ENCODE measurements at regions of chr15 and their contacts with region 1.

Region 1: DNA sequence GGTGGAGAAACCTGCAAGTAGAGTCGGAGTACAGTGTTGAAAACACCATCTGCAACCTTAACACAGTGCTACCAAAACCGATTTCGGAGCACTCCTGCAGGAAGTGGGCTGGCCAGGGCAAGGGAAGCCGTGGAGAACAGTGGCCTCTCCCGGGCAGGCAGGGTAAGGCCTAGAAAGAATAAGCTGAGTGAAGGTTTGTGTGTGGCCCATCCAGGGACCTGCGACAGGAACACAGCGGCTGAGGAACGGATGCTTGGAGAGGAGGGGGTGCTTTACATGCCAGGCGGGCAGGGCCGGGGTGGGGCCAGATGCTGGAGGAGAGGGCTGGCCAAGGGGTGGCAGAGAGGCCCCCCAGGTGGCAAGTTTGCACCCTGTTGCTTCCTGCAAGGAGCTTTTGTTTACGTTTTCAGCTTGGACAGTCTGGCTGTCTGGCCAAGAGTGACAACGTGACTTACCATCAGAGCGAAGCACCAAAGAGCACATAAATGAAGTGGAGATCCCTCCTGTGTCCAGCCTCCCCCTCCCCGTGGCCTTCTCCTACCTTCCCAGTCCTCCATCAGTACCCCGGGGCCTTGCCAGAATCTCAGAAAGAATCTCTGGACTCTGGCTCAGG is 156.5 kb downstream of the PGPEP1L start:
- DNase-seq: peak; percentile 78
- H3K4me3 ChIP-seq: no peak overlapping the region
- H3K27ac ChIP-seq: no peak overlapping the region
- H3K4me1 ChIP-seq: peaks cover 22% of the 10 kb centered on the region
- H3K27me3 ChIP-seq: no peaks in the 10 kb centered on the region
- CTCF ChIP-seq: peak; percentile 81 to 86
- POLR2A ChIP-seq: no peak

Region 2: DNA sequence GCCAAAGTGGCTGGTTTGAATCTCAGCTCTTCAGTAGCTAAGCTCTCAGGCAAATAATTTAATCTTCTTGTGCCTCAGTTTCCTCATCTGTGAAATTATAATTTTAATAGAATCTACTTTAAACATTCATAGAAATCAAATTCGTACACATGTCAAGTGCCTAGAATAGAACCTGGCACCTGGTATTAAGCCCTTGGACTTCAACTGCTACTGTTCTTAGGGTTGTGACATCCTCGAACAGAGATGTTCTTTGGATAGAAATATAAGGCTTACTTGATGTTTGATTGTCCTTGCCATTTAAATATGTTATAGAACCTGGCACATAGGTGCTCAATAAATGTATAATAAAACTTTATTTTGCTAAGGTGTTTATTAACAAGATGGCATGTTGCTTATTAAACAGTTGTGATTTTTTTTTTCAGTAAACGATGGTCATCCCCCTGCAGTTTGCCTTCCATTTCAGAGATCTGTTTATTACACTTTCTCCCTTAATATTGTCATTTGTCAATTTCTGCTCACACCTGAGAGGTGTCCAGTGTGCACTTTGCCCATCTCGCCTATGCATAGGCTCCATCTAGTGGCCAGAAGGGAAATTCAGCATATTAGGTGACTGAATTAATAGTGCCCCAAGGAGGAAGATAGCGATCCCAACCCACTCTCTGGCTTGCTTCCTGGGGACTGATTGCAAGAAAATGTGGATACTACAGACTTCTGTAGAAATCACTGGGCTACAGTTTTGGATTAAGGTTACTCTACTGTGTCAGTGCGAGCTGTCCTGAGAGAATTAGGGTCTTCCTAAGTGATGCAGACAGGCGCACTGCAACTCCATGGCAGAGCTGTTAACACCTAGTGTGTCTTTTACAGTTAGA is 192.0 kb before region 1 on chr15:
- CTCF ChIA-PET with region 1: interaction called, 57 read pairs
- POLR2A ChIA-PET with region 1: no interaction called
- dilution Hi-C with region 1: no loop called
- intact Hi-C with region 1: no loop called
- DNase-seq: peak; percentile 51
- H3K4me3 ChIP-seq: no peak overlapping the region
- H3K27ac ChIP-seq: no peak overlapping the region
- H3K4me1 ChIP-seq: peaks cover 23% of the 10 kb centered on the region
- H3K27me3 ChIP-seq: no peaks in the 10 kb centered on the region
- CTCF ChIP-seq: peak; percentile 75 to 81
- POLR2A ChIP-seq: no peak

Region 3: DNA sequence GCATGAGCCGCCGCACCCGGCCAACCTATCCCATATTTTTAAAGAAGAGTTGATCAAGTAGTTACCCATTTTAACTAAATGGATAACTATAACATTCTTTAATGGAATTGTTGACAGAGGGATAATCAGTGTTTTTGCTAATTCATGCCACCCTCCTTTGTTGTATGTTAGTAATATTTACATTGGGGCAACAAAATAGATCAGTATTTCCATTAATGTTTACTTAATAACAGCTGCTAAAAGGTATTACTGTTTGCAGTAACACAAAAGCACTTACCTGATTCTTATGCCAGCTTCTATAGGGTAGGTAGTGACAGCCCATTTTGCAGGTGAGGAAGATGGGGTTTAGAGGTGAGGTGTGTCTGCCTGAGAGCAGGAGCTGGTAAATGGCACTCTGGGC is 149.4 kb before region 1 on chr15:
- CTCF ChIA-PET with region 1: interaction called, 3 read pairs
- POLR2A ChIA-PET with region 1: interaction called, 10 read pairs
- dilution Hi-C with region 1: no loop called
- intact Hi-C with region 1: no loop called
- DNase-seq: no peak
- H3K4me3 ChIP-seq: no peak overlapping the region
- H3K27ac ChIP-seq: no peak overlapping the region
- H3K4me1 ChIP-seq: no peaks in the 10 kb centered on the region
- H3K27me3 ChIP-seq: no peaks in the 10 kb centered on the region
- CTCF ChIP-seq: no peak
- POLR2A ChIP-seq: no peak

Region 4: GRCh38 chr15:98753726-98754671 is 97.1 kb before region 1 on chr15:
- CTCF ChIA-PET with region 1: interaction called, 13 read pairs
- POLR2A ChIA-PET with region 1: no interaction called
- dilution Hi-C with region 1: no loop called
- intact Hi-C with region 1: no loop called
- DNase-seq: peak; percentile 73
- H3K4me3 ChIP-seq: peak overlapping the region; percentile 25 to 60 (median 34)
- H3K27ac ChIP-seq: peak overlapping the region; percentile 30
- H3K4me1 ChIP-seq: peaks cover 12% of the 10 kb centered on the region
- H3K27me3 ChIP-seq: no peaks in the 10 kb centered on the region
- CTCF ChIP-seq: no peak
- POLR2A ChIP-seq: no peak

Region 5: GRCh38 chr15:98785807-98786621 is 65.1 kb before region 1 on chr15:
- CTCF ChIA-PET with region 1: interaction called, 146 read pairs
- POLR2A ChIA-PET with region 1: no interaction called
- dilution Hi-C with region 1: no loop called
- intact Hi-C with region 1: no loop called
- DNase-seq: no peak
- H3K4me3 ChIP-seq: no peak overlapping the region
- H3K27ac ChIP-seq: no peak overlapping the region
- H3K4me1 ChIP-seq: peaks cover 3% of the 10 kb centered on the region
- H3K27me3 ChIP-seq: no peaks in the 10 kb centered on the region
- CTCF ChIP-seq: no peak
- POLR2A ChIP-seq: no peak

Region 6: DNA sequence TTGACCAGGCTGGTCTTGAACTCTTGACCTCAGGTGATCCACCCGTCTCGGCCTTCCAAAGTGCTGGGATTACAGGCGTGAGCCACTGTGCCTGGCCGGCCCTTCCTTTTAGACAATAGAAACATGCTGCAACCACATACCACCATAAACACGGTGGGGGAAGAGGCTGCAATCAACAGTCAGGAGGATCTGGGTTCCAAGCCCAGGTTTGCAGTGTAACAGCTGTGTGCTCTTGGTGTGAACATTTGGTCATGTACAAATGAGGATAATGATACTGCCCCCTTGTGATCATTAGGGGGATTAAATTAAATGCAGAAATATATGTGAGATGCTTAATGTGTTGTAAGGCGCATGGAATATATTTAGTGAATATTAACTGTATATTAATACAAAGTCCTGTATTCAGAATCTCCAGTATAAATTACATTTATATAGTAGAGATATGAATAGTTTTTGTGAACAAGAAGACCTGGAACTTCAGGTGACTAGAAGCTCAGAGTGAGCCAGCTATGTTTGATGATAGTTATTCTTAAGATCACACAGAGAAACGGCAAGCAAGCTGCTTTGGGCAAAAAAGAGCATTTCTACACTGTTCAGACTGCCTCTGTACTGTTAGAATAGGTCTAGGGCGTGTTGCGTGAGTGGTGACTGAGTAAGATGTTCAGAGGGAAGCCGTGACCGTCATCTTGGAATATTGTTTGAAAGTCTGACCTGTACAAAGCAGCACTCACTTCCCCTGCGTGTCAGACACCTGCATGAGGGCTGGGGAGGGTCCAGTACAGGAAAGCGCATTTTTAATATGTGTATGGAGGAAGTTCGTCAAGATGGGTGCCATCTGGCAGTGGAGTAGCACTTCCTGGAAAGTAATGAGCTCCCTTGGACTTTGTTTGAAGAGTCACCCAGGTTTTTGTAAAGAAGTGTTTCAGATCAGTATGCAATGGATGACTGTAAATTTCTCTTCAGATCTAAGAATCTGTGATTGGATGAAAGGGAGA is 30.8 kb after region 1 on chr15:
- CTCF ChIA-PET with region 1: interaction called, 16 read pairs
- POLR2A ChIA-PET with region 1: no interaction called
- dilution Hi-C with region 1: no loop called
- intact Hi-C with region 1: loop called (anchors 1 kb)
- DNase-seq: peak; percentile 49
- H3K4me3 ChIP-seq: no peak overlapping the region
- H3K27ac ChIP-seq: no peak overlapping the region
- H3K4me1 ChIP-seq: peaks cover 2% of the 10 kb centered on the region
- H3K27me3 ChIP-seq: no peaks in the 10 kb centered on the region
- CTCF ChIP-seq: peak in 1 of 2 donors; percentile 41
- POLR2A ChIP-seq: no peak

Region 7: GRCh38 chr15:98914626-98915025 is 63.6 kb after region 1 on chr15:
- CTCF ChIA-PET with region 1: interaction called, 10 read pairs
- POLR2A ChIA-PET with region 1: no interaction called
- dilution Hi-C with region 1: no loop called
- intact Hi-C with region 1: no loop called
- DNase-seq: peak; percentile 61
- H3K4me3 ChIP-seq: peak overlapping the region in 1 of 3 experiments; percentile 17
- H3K27ac ChIP-seq: peak overlapping the region; percentile 92
- H3K4me1 ChIP-seq: peaks cover 26% of the 10 kb centered on the region
- H3K27me3 ChIP-seq: no peaks in the 10 kb centered on the region
- CTCF ChIP-seq: no peak
- POLR2A ChIP-seq: no peak

Region 8: GRCh38 chr15:99442252-99442897 is 591.3 kb after region 1 on chr15:
- CTCF ChIA-PET with region 1: no interaction called
- POLR2A ChIA-PET with region 1: no interaction called
- dilution Hi-C with region 1: no loop called
- intact Hi-C with region 1: no loop called
- DNase-seq: peak; percentile 94
- H3K4me3 ChIP-seq: no peak overlapping the region
- H3K27ac ChIP-seq: peak overlapping the region; percentile 47
- H3K4me1 ChIP-seq: peaks cover 21% of the 10 kb centered on the region
- H3K27me3 ChIP-seq: no peaks in the 10 kb centered on the region
- CTCF ChIP-seq: no peak
- POLR2A ChIP-seq: no peak

Measured in endothelial cell of umbilical vein (primary cell).